Mammary epithelial cell (primary cell): ENCODE measurements at regions of chr9 and their contacts with region 1.

Region 1: GRCh38 chr9:95726756-95727155 is 148.7 kb upstream of the ERCC6L2 start:
- DNase-seq: peak; percentile 14
- H3K4me3 ChIP-seq: no peak overlapping the region
- H3K27ac ChIP-seq: no peak overlapping the region
- H3K4me1 ChIP-seq: no peaks in the 10 kb centered on the region
- H3K27me3 ChIP-seq: no peaks in the 10 kb centered on the region
- CTCF ChIP-seq: peak; percentile 75 to 76

Region 2: DNA sequence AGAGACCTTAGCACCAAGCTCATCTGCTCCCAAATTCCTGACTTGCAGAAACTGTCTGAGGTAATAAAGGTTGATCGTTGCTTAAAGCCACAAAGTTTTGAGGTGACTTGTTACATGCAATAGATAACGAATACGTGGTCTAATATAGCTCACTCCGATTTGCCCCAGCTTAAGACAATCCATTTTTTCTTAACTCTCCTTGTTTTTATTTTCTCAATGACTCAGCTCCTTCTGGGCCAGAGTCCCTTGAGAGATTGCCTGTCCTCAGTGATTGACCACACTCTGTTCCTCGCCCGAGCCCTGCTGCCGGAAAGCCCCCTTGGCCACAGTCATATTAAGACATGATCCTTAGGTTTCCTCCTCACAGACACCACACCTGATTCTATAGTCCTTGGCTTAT is 345.5 kb before region 1 on chr9:
- CTCF ChIA-PET with region 1: interaction called, 11 read pairs
- dilution Hi-C with region 1: no loop called
- in situ Hi-C with region 1: no loop called
- intact Hi-C with region 1: no loop called
- DNase-seq: peak; percentile 50
- H3K4me3 ChIP-seq: no peak overlapping the region
- H3K27ac ChIP-seq: no peak overlapping the region
- H3K4me1 ChIP-seq: peaks cover 19% of the 10 kb centered on the region
- H3K27me3 ChIP-seq: no peaks in the 10 kb centered on the region
- CTCF ChIP-seq: no peak

Region 3: DNA sequence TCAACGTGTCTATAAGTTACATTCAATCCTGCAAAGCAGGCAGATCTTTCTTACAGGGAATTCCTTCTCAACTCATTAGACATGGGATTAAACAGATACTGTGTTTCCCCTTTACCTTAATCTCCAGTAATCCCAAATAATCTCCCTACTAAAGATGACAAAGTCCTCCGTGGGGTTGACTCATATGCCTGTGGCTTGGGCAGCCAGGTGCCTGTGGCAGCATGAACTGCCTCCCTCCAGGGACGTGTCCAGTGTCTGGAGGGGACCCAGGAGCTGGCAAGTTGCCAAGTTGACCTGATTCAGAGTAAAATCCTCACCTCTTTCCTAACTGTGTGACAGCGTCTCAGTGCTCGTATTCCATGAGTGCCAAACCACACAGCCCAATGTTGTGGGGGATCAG is 115.4 kb before region 1 on chr9:
- CTCF ChIA-PET with region 1: no interaction called
- dilution Hi-C with region 1: no loop called
- in situ Hi-C with region 1: no loop called
- intact Hi-C with region 1: no loop called
- DNase-seq: no peak
- H3K4me3 ChIP-seq: no peak overlapping the region
- H3K27ac ChIP-seq: no peak overlapping the region
- H3K4me1 ChIP-seq: no peaks in the 10 kb centered on the region
- H3K27me3 ChIP-seq: no peaks in the 10 kb centered on the region
- CTCF ChIP-seq: no peak

Region 4: GRCh38 chr9:96061293-96061987 is 334.7 kb after region 1 on chr9:
- CTCF ChIA-PET with region 1: no interaction called
- dilution Hi-C with region 1: no loop called
- in situ Hi-C with region 1: no loop called
- intact Hi-C with region 1: loop called (anchors 2 kb)
- DNase-seq: peak; percentile 11
- H3K4me3 ChIP-seq: no peak overlapping the region
- H3K27ac ChIP-seq: no peak overlapping the region
- H3K4me1 ChIP-seq: peaks cover 5% of the 10 kb centered on the region
- H3K27me3 ChIP-seq: no peaks in the 10 kb centered on the region
- CTCF ChIP-seq: peak; percentile 18 to 28

Region 5: DNA sequence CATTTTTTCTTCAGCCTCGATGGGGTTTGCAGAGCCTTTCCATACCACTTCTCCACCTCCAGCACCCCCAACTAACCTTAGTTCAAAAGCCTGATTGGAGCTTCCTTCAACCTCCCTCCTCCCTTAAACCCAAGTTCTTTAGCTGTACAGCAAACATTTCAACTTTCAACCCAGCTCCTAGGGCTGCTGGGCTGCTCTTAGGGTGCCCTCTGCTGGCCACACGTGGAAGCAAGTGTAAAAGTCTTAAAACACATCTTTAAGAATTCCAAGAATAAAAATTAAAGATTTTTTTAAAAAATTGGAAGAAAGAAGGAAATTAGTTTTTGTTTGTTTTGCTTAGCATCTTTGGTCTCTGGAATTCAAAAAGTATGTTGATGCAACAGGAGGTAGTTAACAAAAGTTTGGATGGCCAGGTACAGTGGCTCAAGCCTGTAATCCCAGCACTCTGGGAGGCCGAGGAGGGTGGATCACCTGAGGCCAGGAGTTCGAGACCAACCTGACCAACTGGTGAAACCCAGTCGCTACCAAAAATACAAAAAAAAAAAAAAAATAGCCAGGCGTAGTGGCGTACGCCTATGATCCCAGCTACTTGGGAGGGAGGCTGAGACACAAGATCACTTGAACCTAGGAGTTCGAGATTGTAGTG is 590.7 kb after region 1 on chr9:
- CTCF ChIA-PET with region 1: no interaction called
- dilution Hi-C with region 1: no loop called
- in situ Hi-C with region 1: no loop called
- intact Hi-C with region 1: loop called (anchors 10 kb)
- DNase-seq: peak; percentile 24
- H3K4me3 ChIP-seq: no peak overlapping the region
- H3K27ac ChIP-seq: no peak overlapping the region
- H3K4me1 ChIP-seq: no peaks in the 10 kb centered on the region
- H3K27me3 ChIP-seq: peaks cover under 1% of the 10 kb centered on the region
- CTCF ChIP-seq: peak; percentile 86 to 96

Region 6: GRCh38 chr9:96661711-96662110 is 935.0 kb after region 1 on chr9:
- CTCF ChIA-PET with region 1: no interaction called
- dilution Hi-C with region 1: no loop called
- in situ Hi-C with region 1: no loop called
- intact Hi-C with region 1: loop called (anchors 10 kb)
- DNase-seq: no peak
- H3K4me3 ChIP-seq: no peak overlapping the region
- H3K27ac ChIP-seq: no peak overlapping the region
- H3K4me1 ChIP-seq: no peaks in the 10 kb centered on the region
- H3K27me3 ChIP-seq: no peaks in the 10 kb centered on the region
- CTCF ChIP-seq: no peak